ENCODE measurements at regions of chr11 and their contacts with region 1.

Region 1: GRCh38 chr11:110327508-110327907 is 31.1 kb upstream of the RDX start:
- DNase-seq: no peak
- H3K4me3 Mint-ChIP-seq: peak overlapping the region; percentile 87
- H3K27ac Mint-ChIP-seq: peak overlapping the region; percentile 89
- H3K4me1 Mint-ChIP-seq: peaks cover 34% of the 10 kb centered on the region
- H3K27me3 Mint-ChIP-seq: no peaks in the 10 kb centered on the region

Region 2: GRCh38 chr11:110296226-110297075 is 31.1 kb before region 1 on chr11 and contains the start of gene RDX:
- intact Hi-C with region 1: loop called (anchors 2 kb)
- DNase-seq: peak; percentile 56
- H3K4me3 Mint-ChIP-seq: peak within 1 kb of the TSS; percentile 95
- H3K27ac Mint-ChIP-seq: peak within 1 kb of the TSS; percentile 63
- H3K4me1 Mint-ChIP-seq: peaks cover 43% of the 10 kb centered on the region
- H3K27me3 Mint-ChIP-seq: no peaks in the 10 kb centered on the region
- total RNA-seq, gene RDX: 63.3 and 64.8 TPM in 2 replicates

Region 3: DNA sequence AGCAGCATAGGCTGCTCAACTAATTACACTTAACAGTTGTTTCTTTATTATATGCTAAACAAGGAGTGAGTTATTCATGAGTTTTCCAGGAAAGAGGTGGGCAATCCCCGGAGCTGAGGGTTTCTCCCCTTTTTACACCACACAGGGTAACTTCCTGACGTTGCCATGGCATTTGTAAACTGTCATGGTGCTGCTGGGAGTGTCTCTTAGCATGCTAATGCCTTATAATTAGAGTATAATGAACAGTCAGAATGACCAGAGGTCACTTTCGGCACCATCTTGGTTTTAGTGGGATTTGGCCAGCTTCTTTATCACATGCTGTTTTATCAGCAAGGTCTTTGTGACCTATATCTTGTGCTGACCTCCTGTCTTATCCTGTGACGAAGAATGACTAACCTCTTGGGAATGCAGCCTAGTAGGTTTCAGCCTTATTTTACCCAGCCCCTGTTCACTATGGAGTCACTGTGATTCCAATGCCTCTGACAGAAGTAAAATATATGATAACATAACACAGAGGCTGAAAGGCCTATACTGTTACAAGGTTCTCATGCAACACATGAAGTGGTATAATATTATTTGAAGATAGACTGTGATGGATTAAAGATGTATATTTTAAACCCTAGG is 10.2 kb after region 1 on chr11:
- intact Hi-C with region 1: loop called (anchors 1 kb)
- DNase-seq: no peak
- H3K4me3 Mint-ChIP-seq: no peak overlapping the region
- H3K27ac Mint-ChIP-seq: peak overlapping the region; percentile 24
- H3K4me1 Mint-ChIP-seq: peaks cover 33% of the 10 kb centered on the region
- H3K27me3 Mint-ChIP-seq: no peaks in the 10 kb centered on the region

Region 4: GRCh38 chr11:110356756-110357671 is 29.5 kb after region 1 on chr11:
- intact Hi-C with region 1: loop called (anchors 2 kb)
- DNase-seq: no peak
- H3K4me3 Mint-ChIP-seq: no peak overlapping the region
- H3K27ac Mint-ChIP-seq: peak overlapping the region; percentile 82
- H3K4me1 Mint-ChIP-seq: peaks cover 23% of the 10 kb centered on the region
- H3K27me3 Mint-ChIP-seq: no peaks in the 10 kb centered on the region